ENCODE measurements at regions of chr15 and their contacts with region 1.

Region 1: GRCh38 chr15:57306161-57306943 is 70.0 kb upstream of the CGNL1 start:
- DNase-seq: peak; percentile 87
- H3K27ac ChIP-seq: no peak overlapping the region
- CTCF ChIP-seq: peak; percentile 95

Region 2: DNA sequence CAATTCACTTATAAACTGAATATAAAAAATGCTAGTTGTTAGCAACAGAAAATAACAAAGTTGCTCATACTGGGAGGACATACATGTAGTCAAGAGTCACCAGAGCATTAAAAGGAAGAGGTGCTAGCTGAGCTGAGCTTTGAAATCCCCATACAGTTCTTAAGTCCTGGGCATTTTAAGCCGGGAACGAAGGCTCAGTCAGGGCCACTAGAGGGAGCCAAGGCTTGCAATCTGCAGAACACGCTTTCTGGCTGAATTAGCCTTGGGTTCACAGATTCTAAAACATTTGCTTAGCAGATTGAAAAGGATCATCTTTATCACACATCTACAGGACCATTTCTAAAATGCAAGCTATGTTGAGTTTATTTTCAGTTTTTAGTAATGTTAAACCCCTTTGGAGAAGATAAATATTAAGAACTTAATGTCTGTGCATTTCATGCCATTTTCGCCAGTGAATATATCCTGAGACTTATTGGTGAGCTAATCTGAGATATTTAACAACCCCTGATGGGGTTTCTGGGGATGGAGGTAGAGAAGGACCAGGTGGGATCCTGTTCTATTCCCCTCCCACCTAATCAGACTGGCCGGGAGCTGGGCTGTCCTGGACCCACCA is 815.1 kb before region 1 on chr15:
- CTCF ChIA-PET with region 1: interaction called, 19 read pairs
- POLR2A ChIA-PET with region 1: no interaction called
- DNase-seq: peak; percentile 77
- H3K27ac ChIP-seq: no peak overlapping the region
- CTCF ChIP-seq: peak; percentile 98

Region 3: DNA sequence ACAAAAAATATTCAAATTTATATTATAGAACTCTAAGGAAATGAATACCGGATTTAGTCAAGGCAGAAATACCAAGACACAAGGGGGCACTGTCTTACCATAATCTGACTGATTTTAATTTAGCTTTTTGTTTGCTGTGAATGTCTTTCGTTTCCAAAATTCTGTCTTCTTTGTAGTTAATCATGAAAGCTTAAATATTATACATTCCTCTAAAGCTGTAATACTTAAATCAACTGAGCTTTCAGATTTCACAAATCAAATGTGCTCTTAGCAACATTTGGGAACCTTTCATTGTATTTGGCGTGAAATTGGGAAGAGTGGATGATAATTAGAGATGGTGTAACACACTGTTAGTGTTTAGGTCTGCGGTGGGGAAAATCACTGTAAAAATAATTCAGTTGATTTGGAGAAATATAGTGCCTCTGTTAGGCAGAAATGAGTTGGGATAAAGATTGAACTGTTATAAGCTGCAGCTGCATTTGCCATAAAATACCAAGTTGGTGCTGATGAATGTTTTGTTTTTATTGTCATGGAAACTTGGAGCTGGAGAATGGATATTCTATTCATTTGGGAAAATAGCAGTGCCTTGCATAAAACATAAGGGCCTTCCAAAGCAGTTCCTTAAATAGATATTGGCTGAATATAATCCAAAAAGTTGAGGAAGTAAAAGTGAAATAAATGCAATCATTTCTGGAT is 159.7 kb before region 1 on chr15:
- CTCF ChIA-PET with region 1: interaction called, 23 read pairs
- POLR2A ChIA-PET with region 1: no interaction called
- DNase-seq: peak; percentile 20
- H3K27ac ChIP-seq: no peak overlapping the region
- CTCF ChIP-seq: peak; percentile 87

Region 4: DNA sequence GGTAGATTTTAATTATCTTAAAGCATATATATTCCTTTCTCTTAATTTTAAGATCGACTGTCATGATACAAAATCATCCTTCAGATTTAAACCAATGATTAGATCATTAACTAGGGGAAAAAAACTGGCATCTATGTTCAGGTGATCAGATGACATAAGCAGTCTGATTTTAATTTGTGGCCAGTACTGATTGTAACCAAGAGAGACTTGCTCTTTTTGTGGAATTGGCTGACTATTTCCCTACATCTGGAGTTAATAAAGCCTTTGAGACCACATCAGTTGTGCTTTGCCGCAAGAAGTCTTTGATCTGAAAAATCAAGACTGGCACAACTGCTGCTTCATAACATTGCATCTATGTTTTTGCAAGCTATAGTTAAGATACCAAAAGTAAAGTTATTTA is 78.5 kb before region 1 on chr15:
- CTCF ChIA-PET with region 1: no interaction called
- POLR2A ChIA-PET with region 1: no interaction called
- DNase-seq: no peak
- H3K27ac ChIP-seq: no peak overlapping the region
- CTCF ChIP-seq: no peak